ENCODE measurements at regions of chr20 and their contacts with region 1.

Region 1: DNA sequence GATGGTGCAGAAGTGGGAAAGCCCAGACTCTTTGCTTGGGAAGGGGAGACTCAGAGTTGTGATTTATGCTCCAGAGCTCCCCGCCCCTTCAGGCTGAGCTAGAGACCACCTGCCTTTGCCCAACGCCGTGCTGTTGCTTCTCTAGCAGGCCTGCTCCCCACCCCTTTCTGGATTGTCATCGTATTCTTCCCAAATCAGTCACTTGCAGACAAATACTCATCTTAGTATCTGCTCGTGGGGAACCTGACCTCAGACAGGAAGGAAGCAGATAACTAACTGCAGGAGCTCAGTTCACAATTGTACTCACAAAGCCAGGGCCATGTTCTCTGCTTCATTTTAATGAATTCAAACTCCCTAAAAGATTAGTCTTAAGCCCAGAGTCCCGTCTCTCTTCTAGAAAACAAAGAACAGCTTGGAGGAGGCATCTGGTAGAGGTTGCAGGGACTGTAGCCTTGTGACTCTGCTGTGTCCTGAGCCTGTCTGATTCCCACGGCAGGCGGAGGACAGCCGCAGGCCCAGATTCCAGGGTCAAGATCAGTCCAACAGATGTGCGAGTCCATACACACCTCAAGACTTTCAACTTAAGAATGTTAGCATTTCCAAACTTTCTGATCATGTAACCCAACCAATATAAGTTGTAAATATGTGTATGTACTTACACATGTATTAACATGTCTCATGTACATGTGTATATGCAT is 57.2 kb upstream of the GGTLC1 start:
- DNase-seq: peak in 5 of 9 donors; percentile 30 to 48 (median 37)
- ATAC-seq: peak; percentile 67
- H3K4me3 ChIP-seq: peak overlapping the region; percentile 44
- H3K4me3 Mint-ChIP-seq: peak overlapping the region; percentile 31 to 78 (median 57)
- H3K27ac ChIP-seq: peak overlapping the region; percentile 60
- H3K27ac Mint-ChIP-seq: peak overlapping the region; percentile 76 to 95 (median 87)
- H3K4me1 ChIP-seq: peaks cover 12 to 37% of the 10 kb centered on the region in 2 donors
- H3K4me1 Mint-ChIP-seq: peaks cover 34 to 77% (median 64%) of the 10 kb centered on the region in 7 donors
- H3K27me3 ChIP-seq: no peaks in the 10 kb centered on the region
- H3K27me3 Mint-ChIP-seq: no peaks in the 10 kb centered on the region

Region 2: DNA sequence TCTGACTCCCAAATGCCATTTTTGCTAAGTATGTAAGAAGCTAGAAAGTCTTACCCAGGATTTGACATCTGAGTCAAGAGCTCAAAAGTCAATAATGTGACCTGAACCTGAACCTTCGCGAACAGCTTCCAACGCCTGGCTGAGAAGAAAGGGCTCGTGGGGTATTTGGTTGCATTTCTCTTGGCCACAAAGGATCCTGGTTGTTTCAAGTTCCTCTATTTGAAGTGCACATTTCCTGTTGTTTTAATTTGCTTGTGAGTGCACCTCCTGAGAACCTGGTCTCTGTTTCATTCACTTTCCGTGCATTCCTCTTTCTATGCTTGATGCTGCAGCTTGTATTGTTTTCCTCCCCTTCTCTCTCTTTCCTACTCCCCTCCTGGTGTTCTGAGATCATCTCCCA is 1673.9 kb before region 1 on chr20:
- CTCF ChIA-PET with region 1: no interaction called
- POLR2A ChIA-PET with region 1: no interaction called
- intact Hi-C with region 1: no loop called
- DNase-seq: peak in 5 of 9 donors; percentile 3 to 46 (median 20)
- ATAC-seq: no peak
- H3K4me3 ChIP-seq: no peak overlapping the region
- H3K4me3 Mint-ChIP-seq: peak overlapping the region in 7 of 10 donors; percentile 11 to 61 (median 40)
- H3K27ac ChIP-seq: no peak overlapping the region
- H3K27ac Mint-ChIP-seq: peak overlapping the region in 2 of 9 donors; percentile 6 to 59
- H3K4me1 ChIP-seq: no peaks in the 10 kb centered on the region
- H3K4me1 Mint-ChIP-seq: peaks cover 5 to 33% (median 11%) of the 10 kb centered on the region in 7 donors
- H3K27me3 ChIP-seq: no peaks in the 10 kb centered on the region
- H3K27me3 Mint-ChIP-seq: peaks cover 0 to 4% (median 0%) of the 10 kb centered on the region in 5 donors

Region 3: GRCh38 chr20:24034820-24035219 is 10.9 kb before region 1 on chr20:
- CTCF ChIA-PET with region 1: interaction called, 4 read pairs
- POLR2A ChIA-PET with region 1: interaction called, 4 read pairs
- intact Hi-C with region 1: loop called (anchors 2 kb)
- DNase-seq: no peak
- ATAC-seq: no peak
- H3K4me3 ChIP-seq: no peak overlapping the region
- H3K4me3 Mint-ChIP-seq: no peak overlapping the region
- H3K27ac ChIP-seq: no peak overlapping the region
- H3K27ac Mint-ChIP-seq: peak overlapping the region in 4 of 9 donors; percentile 1 to 53 (median 42)
- H3K4me1 ChIP-seq: peaks cover 8 to 13% of the 10 kb centered on the region in 2 donors
- H3K4me1 Mint-ChIP-seq: peaks cover 8 to 57% (median 48%) of the 10 kb centered on the region in 7 donors
- H3K27me3 ChIP-seq: no peaks in the 10 kb centered on the region
- H3K27me3 Mint-ChIP-seq: no peaks in the 10 kb centered on the region

Region 4: GRCh38 chr20:24060851-24061590 is 15.3 kb after region 1 on chr20:
- CTCF ChIA-PET with region 1: no interaction called
- POLR2A ChIA-PET with region 1: interaction called, 12 read pairs
- intact Hi-C with region 1: loop called in 1 of 2 experiments (anchors 2 kb)
- DNase-seq: no peak
- ATAC-seq: no peak
- H3K4me3 ChIP-seq: no peak overlapping the region
- H3K4me3 Mint-ChIP-seq: no peak overlapping the region
- H3K27ac ChIP-seq: no peak overlapping the region
- H3K27ac Mint-ChIP-seq: peak overlapping the region in 1 of 9 donors; percentile 20
- H3K4me1 ChIP-seq: peaks cover 5 to 6% of the 10 kb centered on the region in 2 donors
- H3K4me1 Mint-ChIP-seq: peaks cover 5 to 12% (median 7%) of the 10 kb centered on the region in 7 donors
- H3K27me3 ChIP-seq: no peaks in the 10 kb centered on the region
- H3K27me3 Mint-ChIP-seq: peaks cover 0 to 2% (median 0%) of the 10 kb centered on the region in 5 donors

Region 5: GRCh38 chr20:24066076-24066700 is 20.4 kb after region 1 on chr20:
- CTCF ChIA-PET with region 1: no interaction called
- POLR2A ChIA-PET with region 1: interaction called, 4 read pairs
- intact Hi-C with region 1: loop called in 1 of 2 experiments (anchors 2 kb)
- DNase-seq: peak in 7 of 9 donors; percentile 21 to 57 (median 46)
- ATAC-seq: peak; percentile 91
- H3K4me3 ChIP-seq: peak overlapping the region; percentile 20
- H3K4me3 Mint-ChIP-seq: peak overlapping the region; percentile 44 to 90 (median 79)
- H3K27ac ChIP-seq: peak overlapping the region; percentile 60
- H3K27ac Mint-ChIP-seq: peak overlapping the region; percentile 0 to 94 (median 91)
- H3K4me1 ChIP-seq: peaks cover 6 to 7% of the 10 kb centered on the region in 2 donors
- H3K4me1 Mint-ChIP-seq: peaks cover 11 to 27% (median 18%) of the 10 kb centered on the region in 7 donors
- H3K27me3 ChIP-seq: no peaks in the 10 kb centered on the region
- H3K27me3 Mint-ChIP-seq: peaks cover 0 to 6% (median 0%) of the 10 kb centered on the region in 5 donors

Region 6: DNA sequence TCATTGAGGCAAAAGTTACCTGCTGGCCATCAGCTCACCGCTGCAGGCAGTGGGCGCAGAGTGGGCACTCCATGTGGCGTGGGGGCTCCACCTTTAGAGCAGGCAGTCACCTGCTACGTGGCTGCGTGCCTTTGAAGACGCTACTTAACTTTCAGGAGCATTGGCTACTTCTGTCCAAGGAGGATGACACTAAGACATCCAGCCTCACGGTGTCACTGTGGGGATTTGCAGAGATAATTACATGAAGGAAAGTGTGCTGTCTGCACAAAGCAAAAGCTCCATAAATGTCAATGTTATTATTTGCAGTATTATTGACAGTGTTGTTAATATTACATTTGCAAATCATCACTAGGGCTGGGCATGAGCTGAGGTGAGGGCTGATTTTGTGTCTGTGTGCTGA is 257.6 kb after region 1 on chr20:
- CTCF ChIA-PET with region 1: no interaction called
- POLR2A ChIA-PET with region 1: no interaction called
- intact Hi-C with region 1: no loop called
- DNase-seq: no peak
- ATAC-seq: no peak
- H3K4me3 ChIP-seq: no peak overlapping the region
- H3K4me3 Mint-ChIP-seq: no peak overlapping the region
- H3K27ac ChIP-seq: no peak overlapping the region
- H3K27ac Mint-ChIP-seq: no peak overlapping the region
- H3K4me1 ChIP-seq: no peaks in the 10 kb centered on the region
- H3K4me1 Mint-ChIP-seq: peaks cover 2 to 14% (median 11%) of the 10 kb centered on the region in 7 donors
- H3K27me3 ChIP-seq: no peaks in the 10 kb centered on the region
- H3K27me3 Mint-ChIP-seq: peaks cover 0 to 26% (median 11%) of the 10 kb centered on the region in 5 donors

Region 7: GRCh38 chr20:24560571-24561491 is 515.1 kb after region 1 on chr20:
- CTCF ChIA-PET with region 1: no interaction called
- POLR2A ChIA-PET with region 1: no interaction called
- intact Hi-C with region 1: no loop called
- DNase-seq: no peak
- ATAC-seq: no peak
- H3K4me3 ChIP-seq: no peak overlapping the region
- H3K4me3 Mint-ChIP-seq: no peak overlapping the region
- H3K27ac ChIP-seq: no peak overlapping the region
- H3K27ac Mint-ChIP-seq: no peak overlapping the region
- H3K4me1 ChIP-seq: no peaks in the 10 kb centered on the region
- H3K4me1 Mint-ChIP-seq: peaks cover 0 to under 1% (median 0%) of the 10 kb centered on the region in 7 donors
- H3K27me3 ChIP-seq: no peaks in the 10 kb centered on the region
- H3K27me3 Mint-ChIP-seq: peaks cover 0 to 42% (median 28%) of the 10 kb centered on the region in 5 donors

Measured in naive thymus-derived CD4-positive, alpha-beta T cell (primary cell).